ENCODE measurements at regions of chr5 and their contacts with region 1.

Region 1: GRCh38 chr5:73716284-73716808 is 90.3 kb downstream of the ARHGEF28 start:
- DNase-seq: no peak
- ATAC-seq: peak; percentile 96
- H3K4me3 ChIP-seq: no peak overlapping the region
- H3K27ac ChIP-seq: no peak overlapping the region
- H3K4me1 ChIP-seq: no peaks in the 10 kb centered on the region
- H3K27me3 ChIP-seq: no peaks in the 10 kb centered on the region
- CTCF ChIP-seq: 0 out of 6 replicates have a peak, but pooled peaks of 1 of the 3 experiments have one; percentile 2
- EP300 ChIP-seq: no peak
- POLR2A ChIP-seq: no peak
- RAD21 ChIP-seq: no peak

Region 2: DNA sequence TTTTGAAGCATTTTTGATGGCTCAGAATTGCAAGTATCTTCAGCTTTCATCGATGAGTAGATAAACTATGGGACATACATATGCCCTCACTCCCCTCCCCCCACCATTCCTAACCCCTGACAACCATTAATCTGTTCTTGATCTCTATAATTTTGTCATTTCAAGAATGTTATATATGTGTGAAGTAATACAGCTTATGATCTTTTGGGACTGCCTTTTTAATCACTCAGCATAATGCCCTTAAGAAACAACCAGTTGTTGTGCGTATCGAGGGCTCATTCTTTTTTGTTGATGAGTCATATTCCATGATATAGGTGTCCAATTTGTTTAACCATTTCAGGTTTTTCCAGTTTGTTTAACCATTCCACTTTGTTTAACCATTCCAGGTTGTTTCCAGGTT is 14.8 kb before region 1 on chr5:
- CTCF ChIA-PET with region 1: interaction called, 10 read pairs
- POLR2A ChIA-PET with region 1: no interaction called
- RAD21 ChIA-PET with region 1: interaction called, 49 read pairs
- SMC1A ChIA-PET with region 1: interaction called, 6 read pairs
- in situ Hi-C with region 1: no loop called
- intact Hi-C with region 1: no loop called
- DNase-seq: no peak
- ATAC-seq: no peak
- H3K4me3 ChIP-seq: no peak overlapping the region
- H3K27ac ChIP-seq: no peak overlapping the region
- H3K4me1 ChIP-seq: no peaks in the 10 kb centered on the region
- H3K27me3 ChIP-seq: no peaks in the 10 kb centered on the region
- CTCF ChIP-seq: no peak
- EP300 ChIP-seq: no peak
- POLR2A ChIP-seq: no peak
- RAD21 ChIP-seq: no peak

Region 3: DNA sequence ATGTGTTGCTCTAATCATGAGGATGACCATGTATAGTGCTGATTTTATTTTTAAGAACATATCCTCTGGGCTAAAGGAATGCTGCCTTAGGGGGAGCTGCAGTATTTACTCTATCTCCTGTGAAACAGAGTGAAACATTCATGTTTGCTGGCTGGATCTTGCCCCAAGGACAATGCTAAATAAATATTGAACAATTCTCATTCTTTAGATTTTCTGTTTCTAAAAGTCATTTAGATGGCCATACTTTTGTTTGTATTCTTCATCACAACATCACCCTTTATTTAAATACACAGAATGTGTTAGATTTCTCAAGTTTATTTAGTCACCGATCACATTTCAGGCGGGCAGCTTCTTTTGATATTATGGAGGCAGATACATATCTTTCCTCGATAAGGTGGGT is 13.0 kb after region 1 on chr5:
- CTCF ChIA-PET with region 1: interaction called, 4 read pairs
- POLR2A ChIA-PET with region 1: interaction called, 3 read pairs
- RAD21 ChIA-PET with region 1: no interaction called
- SMC1A ChIA-PET with region 1: interaction called, 11 read pairs
- in situ Hi-C with region 1: no loop called
- intact Hi-C with region 1: no loop called
- DNase-seq: no peak
- ATAC-seq: no peak
- H3K4me3 ChIP-seq: no peak overlapping the region
- H3K27ac ChIP-seq: no peak overlapping the region
- H3K4me1 ChIP-seq: no peaks in the 10 kb centered on the region
- H3K27me3 ChIP-seq: no peaks in the 10 kb centered on the region
- CTCF ChIP-seq: no peak
- EP300 ChIP-seq: no peak
- POLR2A ChIP-seq: no peak
- RAD21 ChIP-seq: no peak

Region 4: DNA sequence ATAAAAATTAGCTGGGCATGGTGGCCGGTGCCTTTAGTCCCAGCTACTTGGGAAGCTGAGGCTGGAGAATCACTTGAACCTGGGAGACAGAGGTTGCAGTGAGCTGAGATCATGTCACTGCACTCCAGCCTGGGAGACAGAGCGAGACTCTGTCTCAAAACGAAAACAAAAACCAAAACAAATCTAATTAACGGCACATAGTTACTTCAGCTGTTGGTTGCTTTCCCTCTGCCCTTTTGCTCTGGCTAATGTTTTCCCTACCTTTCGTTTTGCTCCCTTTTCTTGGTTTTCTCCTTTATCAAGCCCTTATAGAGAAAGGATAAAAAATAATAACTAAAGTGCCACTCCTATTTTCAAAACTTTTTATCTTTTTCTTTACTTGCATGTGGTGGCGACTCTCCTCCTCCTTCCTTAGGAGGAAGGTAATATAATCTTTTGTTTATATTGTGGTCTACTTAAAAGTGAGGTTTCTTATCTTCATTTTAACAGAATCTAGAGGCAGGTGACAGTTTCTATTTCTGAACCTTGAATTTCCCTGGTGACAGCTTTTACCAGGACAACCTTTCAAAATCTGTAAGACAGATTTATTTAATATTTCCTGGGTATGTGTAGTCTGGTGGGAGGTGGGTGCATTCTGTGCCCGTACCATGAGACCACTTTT is 35.0 kb after region 1 on chr5:
- CTCF ChIA-PET with region 1: interaction called, 3 read pairs
- POLR2A ChIA-PET with region 1: interaction called, 3 read pairs
- RAD21 ChIA-PET with region 1: interaction called, 7 read pairs
- SMC1A ChIA-PET with region 1: interaction called, 15 read pairs
- in situ Hi-C with region 1: no loop called
- intact Hi-C with region 1: no loop called
- DNase-seq: no peak
- ATAC-seq: peak; percentile 86
- H3K4me3 ChIP-seq: no peak overlapping the region
- H3K27ac ChIP-seq: peak overlapping the region; percentile 32
- H3K4me1 ChIP-seq: peaks cover 3% of the 10 kb centered on the region; the same call in 1 of the 2 replicates
- H3K27me3 ChIP-seq: peaks cover 0 to 4% of the 10 kb centered on the region in 2 experiments; a peak in 2 of 4 replicates
- CTCF ChIP-seq: no peak
- EP300 ChIP-seq: peak in 1 of 2 experiments; percentile 34; a peak in 1 of 4 replicates
- POLR2A ChIP-seq: no peak
- RAD21 ChIP-seq: no peak